Activated CD4-positive, alpha-beta T cell treated with anti-CD3 and anti-CD28 coated beads for 36 hours (primary cell): ENCODE measurements at regions of chr2 and their contacts with region 1.

Region 1: GRCh38 chr2:172710584-172711024 is 25.0 kb upstream of the RAPGEF4 start:
- DNase-seq: peak; percentile 62
- ATAC-seq: no peak
- H3K4me3 Mint-ChIP-seq: no peak overlapping the region
- H3K27ac Mint-ChIP-seq: no peak overlapping the region
- H3K4me1 Mint-ChIP-seq: no peaks in the 10 kb centered on the region
- H3K27me3 Mint-ChIP-seq: peaks cover 5% of the 10 kb centered on the region

Region 2: DNA sequence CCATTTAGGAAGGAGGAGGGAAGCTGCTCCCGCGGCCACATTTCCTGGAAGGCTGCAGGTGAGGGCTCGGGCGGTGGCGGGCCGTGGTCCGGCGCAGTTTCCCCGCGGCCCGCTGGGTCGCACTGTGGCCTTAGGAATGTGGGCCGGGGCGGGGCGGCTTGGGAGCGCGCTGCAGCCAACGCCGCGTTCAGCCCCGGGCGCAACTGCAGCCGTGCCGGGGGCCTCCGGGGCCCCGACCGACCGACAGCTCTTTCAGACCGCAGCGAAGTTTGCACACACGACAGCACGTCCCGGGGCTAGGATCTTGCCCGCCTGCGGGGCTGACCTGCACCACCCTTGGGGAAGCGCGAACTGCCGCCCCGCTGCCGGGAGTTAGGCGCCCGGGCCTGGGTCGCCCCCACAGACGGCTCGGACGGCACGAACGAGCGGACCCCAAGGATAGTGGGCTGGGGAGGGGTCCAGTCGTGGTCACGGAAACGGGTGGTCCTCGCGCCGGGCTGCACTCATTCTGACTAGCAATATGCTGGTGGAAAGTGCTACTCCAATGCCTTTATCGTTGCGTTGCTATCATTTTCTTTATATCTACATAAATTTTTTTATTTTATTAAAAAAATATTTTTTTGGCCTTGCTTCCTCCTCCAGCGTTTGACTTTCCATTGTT is 538.0 kb before region 1 on chr2:
- CTCF ChIA-PET with region 1: no interaction called
- POLR2A ChIA-PET with region 1: no interaction called
- intact Hi-C with region 1: loop called (anchors 2 to 5 kb)
- DNase-seq: peak; percentile 77
- ATAC-seq: peak; percentile 97
- H3K4me3 Mint-ChIP-seq: peak overlapping the region; percentile 55
- H3K27ac Mint-ChIP-seq: no peak overlapping the region
- H3K4me1 Mint-ChIP-seq: peaks cover 4% of the 10 kb centered on the region
- H3K27me3 Mint-ChIP-seq: peaks cover 4% of the 10 kb centered on the region

Region 3: GRCh38 chr2:172350839-172351479 is 359.6 kb before region 1 on chr2:
- CTCF ChIA-PET with region 1: no interaction called
- POLR2A ChIA-PET with region 1: no interaction called
- intact Hi-C with region 1: no loop called
- DNase-seq: no peak
- ATAC-seq: no peak
- H3K4me3 Mint-ChIP-seq: no peak overlapping the region
- H3K27ac Mint-ChIP-seq: no peak overlapping the region
- H3K4me1 Mint-ChIP-seq: no peaks in the 10 kb centered on the region
- H3K27me3 Mint-ChIP-seq: no peaks in the 10 kb centered on the region

Region 4: DNA sequence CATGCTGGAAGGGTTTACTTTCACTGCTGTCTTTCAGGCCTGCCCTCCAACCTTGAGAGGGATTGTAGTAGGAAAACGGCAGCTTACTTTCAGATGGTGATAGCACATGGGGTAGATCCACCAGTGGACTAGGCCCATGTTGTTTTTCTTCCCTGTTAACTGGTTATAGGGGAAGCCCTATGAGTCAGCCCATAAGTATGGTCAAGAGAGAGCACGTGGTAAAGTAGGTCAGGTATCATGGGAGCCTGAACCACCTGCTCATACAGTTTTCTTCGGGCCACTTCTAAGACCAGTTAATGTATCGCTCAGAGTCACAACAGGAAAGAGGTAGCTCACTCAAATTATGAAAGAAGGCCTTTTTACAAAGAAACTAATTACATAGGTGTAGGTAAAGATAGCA is 121.7 kb before region 1 on chr2:
- CTCF ChIA-PET with region 1: no interaction called
- POLR2A ChIA-PET with region 1: no interaction called
- intact Hi-C with region 1: loop called (anchors 1 to 2 kb)
- DNase-seq: no peak
- ATAC-seq: no peak
- H3K4me3 Mint-ChIP-seq: no peak overlapping the region
- H3K27ac Mint-ChIP-seq: no peak overlapping the region
- H3K4me1 Mint-ChIP-seq: peaks cover 41% of the 10 kb centered on the region
- H3K27me3 Mint-ChIP-seq: no peaks in the 10 kb centered on the region

Region 5: GRCh38 chr2:172629586-172629985 is 81.0 kb before region 1 on chr2:
- CTCF ChIA-PET with region 1: no interaction called
- POLR2A ChIA-PET with region 1: no interaction called
- intact Hi-C with region 1: no loop called
- DNase-seq: no peak
- ATAC-seq: no peak
- H3K4me3 Mint-ChIP-seq: no peak overlapping the region
- H3K27ac Mint-ChIP-seq: no peak overlapping the region
- H3K4me1 Mint-ChIP-seq: no peaks in the 10 kb centered on the region
- H3K27me3 Mint-ChIP-seq: no peaks in the 10 kb centered on the region